BJ (cell line): ENCODE measurements at regions of chr16 and their contacts with region 1.

Region 1: GRCh38 chr16:50354629-50355456 is 13.9 kb downstream of the BRD7 start:
- DNase-seq: no peak
- H3K4me3 ChIP-seq: no peak overlapping the region
- H3K27me3 ChIP-seq: no peaks in the 10 kb centered on the region
- CTCF ChIP-seq: peak; percentile 54

Region 2: DNA sequence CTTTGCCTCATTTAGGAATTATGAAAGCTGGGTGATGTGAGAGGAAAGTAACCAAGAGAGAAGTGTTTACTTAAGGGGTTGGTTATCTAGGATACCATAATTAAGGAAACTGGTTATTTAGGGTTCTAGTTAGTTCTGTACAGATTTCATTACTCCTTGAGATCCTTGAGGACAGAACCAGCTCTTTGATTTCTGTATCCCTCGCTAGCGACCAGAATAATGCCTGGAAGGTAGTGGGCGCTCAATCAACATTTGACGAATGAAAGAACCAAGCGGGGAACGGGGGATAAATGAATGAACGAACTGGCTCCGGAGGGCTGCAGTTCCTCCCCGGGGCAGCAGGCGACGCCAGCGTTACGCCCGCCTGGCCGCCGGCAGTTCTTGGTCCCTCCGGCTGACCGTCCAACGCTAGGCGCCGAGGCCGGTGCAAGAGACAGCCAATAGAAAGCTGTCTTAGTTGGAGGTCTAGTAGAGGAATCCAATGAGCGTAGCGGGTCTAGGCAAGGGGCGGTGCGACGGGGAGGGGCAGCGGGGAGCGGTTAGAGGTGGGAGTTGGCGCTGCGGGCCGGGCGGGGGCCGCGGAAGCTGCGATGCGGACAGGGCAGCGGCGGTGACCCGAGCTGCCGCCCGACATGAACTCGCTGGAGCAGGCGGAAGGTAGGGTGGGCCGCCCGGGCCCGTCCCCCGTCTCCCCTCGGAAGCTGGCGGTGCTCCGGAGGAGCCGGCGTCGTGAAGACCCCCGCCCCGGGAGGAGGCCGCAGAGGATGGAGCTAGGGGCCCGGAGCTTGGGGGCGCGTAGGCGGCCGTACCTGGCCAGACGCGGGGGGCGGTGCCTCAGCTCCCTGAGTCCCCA is 329.9 kb before region 1 on chr16 and contains the start of gene CNEP1R1:
- CTCF ChIA-PET with region 1: interaction called, 10 read pairs
- POLR2A ChIA-PET with region 1: no interaction called
- DNase-seq: peak; percentile 72
- H3K4me3 ChIP-seq: peak within 1 kb of the TSS; percentile 70
- H3K27me3 ChIP-seq: peaks cover 2% of the 10 kb centered on the region
- CTCF ChIP-seq: peak; percentile 100
- polyA plus RNA-seq, gene CNEP1R1: 15.2 and 24.5 TPM in 2 replicates

Region 3: DNA sequence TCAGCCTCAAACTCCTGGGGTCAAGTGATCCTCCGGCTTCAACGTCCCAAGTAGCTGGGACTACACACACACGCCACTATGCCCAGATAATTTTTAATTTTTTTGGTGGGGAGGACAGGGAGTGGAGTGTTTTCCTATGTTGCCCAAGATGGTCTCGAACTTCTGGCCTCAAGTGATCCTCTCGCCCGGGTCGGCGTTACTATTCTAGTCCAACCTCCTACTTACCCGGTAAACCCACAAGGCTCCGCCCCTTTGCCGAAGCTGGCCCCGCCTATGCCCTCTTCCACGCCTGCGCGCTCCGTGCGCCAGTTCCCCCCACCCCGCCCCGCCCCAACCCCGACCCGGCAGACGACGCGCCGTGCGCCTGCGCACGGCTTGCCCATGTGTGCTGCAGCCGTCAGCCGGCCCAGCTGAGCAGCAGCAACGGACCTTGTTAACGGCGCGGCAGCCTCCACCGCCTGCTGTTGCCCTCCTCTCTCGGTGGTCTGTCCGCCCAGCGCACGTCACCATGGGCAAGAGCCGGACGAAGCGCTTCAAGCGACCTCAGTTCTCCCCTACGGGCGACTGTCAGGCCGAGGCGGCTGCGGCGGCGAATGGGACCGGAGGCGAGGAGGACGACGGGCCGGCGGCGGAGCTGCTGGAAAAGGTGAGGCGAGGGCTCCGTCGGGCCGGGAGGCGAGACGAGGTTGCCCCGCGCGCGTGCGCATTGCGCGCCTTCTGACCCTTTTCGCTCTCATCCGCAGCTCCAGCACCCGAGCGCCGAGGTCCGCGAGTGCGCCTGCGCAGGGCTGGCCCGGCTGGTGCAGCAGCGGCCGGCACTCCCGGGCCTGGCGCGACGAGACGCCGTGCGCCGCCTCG is 289.0 kb before region 1 on chr16 and contains the start of gene HEATR3:
- CTCF ChIA-PET with region 1: interaction called, 10 read pairs
- POLR2A ChIA-PET with region 1: no interaction called
- DNase-seq: peak; percentile 56
- H3K4me3 ChIP-seq: peak within 1 kb of the TSS; percentile 98
- H3K27me3 ChIP-seq: no peaks in the 10 kb centered on the region
- CTCF ChIP-seq: no peak
- polyA plus RNA-seq, gene HEATR3: 13.0 and 18.5 TPM in 2 replicates

Region 4: GRCh38 chr16:50238868-50239301 is 116.0 kb before region 1 on chr16:
- CTCF ChIA-PET with region 1: interaction called, 13 read pairs
- POLR2A ChIA-PET with region 1: no interaction called
- DNase-seq: no peak
- H3K4me3 ChIP-seq: no peak overlapping the region
- H3K27me3 ChIP-seq: peaks cover 4% of the 10 kb centered on the region
- CTCF ChIP-seq: no peak

Region 5: GRCh38 chr16:50326949-50327402 is 27.9 kb before region 1 on chr16:
- CTCF ChIA-PET with region 1: interaction called, 12 read pairs
- POLR2A ChIA-PET with region 1: no interaction called
- DNase-seq: no peak
- H3K4me3 ChIP-seq: no peak overlapping the region
- H3K27me3 ChIP-seq: no peaks in the 10 kb centered on the region
- CTCF ChIP-seq: peak; percentile 58

Region 6: DNA sequence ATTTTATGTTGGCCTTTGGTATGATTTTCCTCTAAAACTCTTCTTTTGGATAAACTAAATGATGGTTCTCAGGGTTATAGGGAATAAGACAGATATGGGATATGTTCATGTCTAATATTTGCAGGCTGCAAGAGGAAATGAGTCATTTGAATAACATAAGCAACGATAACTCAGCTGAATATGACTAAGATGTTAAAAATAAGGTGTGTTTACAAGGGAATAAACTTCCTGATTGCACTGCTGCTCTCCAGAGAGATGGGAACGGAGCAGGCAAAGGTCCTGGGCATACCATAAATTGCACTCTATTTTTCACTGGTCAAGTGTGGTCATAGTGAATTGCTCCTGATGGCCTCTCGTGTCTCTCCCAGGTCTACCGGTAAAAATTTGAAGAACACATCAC is 1525.9 kb after region 1 on chr16:
- CTCF ChIA-PET with region 1: no interaction called
- POLR2A ChIA-PET with region 1: interaction called, 11 read pairs
- DNase-seq: peak; percentile 58
- H3K4me3 ChIP-seq: no peak overlapping the region
- H3K27me3 ChIP-seq: no peaks in the 10 kb centered on the region
- CTCF ChIP-seq: no peak